PC-9 (cell line): ENCODE measurements at regions of chr4 and their contacts with region 1.

Region 1: DNA sequence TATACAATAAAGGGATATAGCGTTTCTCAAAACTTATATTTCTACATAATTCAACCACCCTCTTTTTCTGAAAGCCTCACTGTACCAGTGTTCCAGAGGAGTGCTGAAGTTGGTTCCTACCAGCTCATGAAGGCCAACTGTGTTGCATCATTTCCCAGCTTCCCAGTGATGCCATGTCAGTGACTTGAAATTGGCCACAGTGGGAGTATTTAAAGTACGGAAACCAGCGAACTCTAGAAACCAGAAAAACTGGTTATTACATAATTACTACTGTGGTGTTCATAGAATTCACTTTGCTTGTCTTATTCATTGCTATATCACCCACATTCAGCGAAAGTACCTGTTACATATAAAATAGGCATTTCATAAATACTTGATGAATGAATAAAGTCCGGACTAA is 135.4 kb downstream of the GC start:
- DNase-seq: peak; percentile 35 to 85
- H3K4me3 ChIP-seq: peak overlapping the region; percentile 36; the same call in 1 of the 2 replicates
- H3K27ac ChIP-seq: peak overlapping the region; percentile 94
- H3K4me1 ChIP-seq: peaks cover 15% of the 10 kb centered on the region
- H3K27me3 ChIP-seq: no peaks in the 10 kb centered on the region
- CTCF ChIP-seq: no peak

Region 2: GRCh38 chr4:71607784-71608682 is 40.4 kb before region 1 on chr4:
- CTCF ChIA-PET with region 1: no interaction called
- POLR2A ChIA-PET with region 1: no interaction called
- intact Hi-C with region 1: loop called (anchors 2 kb)
- DNase-seq: peak in 1 of 2 experiments; percentile 94
- H3K4me3 ChIP-seq: peak overlapping the region; percentile 29; the same call in 1 of the 2 replicates
- H3K27ac ChIP-seq: peak overlapping the region; percentile 99
- H3K4me1 ChIP-seq: peaks cover 33% of the 10 kb centered on the region
- H3K27me3 ChIP-seq: no peaks in the 10 kb centered on the region
- CTCF ChIP-seq: no peak